Activated T-helper 1 cell treated with anti-CD3 and anti-CD28 coated beads, Interleukin-12 subunit alpha, Interleukin-12 subunit beta, Interleukin-2, Interleukin-4 antibody, amounts not matched to agents 30 ng/mL and 10 ng/mL and 1 ng/mL, durations not matched to agents 14 hours and 24 hours and 36 hours (primary cell): ENCODE measurements at regions of chr1 and their contacts with region 1.

Region 1: DNA sequence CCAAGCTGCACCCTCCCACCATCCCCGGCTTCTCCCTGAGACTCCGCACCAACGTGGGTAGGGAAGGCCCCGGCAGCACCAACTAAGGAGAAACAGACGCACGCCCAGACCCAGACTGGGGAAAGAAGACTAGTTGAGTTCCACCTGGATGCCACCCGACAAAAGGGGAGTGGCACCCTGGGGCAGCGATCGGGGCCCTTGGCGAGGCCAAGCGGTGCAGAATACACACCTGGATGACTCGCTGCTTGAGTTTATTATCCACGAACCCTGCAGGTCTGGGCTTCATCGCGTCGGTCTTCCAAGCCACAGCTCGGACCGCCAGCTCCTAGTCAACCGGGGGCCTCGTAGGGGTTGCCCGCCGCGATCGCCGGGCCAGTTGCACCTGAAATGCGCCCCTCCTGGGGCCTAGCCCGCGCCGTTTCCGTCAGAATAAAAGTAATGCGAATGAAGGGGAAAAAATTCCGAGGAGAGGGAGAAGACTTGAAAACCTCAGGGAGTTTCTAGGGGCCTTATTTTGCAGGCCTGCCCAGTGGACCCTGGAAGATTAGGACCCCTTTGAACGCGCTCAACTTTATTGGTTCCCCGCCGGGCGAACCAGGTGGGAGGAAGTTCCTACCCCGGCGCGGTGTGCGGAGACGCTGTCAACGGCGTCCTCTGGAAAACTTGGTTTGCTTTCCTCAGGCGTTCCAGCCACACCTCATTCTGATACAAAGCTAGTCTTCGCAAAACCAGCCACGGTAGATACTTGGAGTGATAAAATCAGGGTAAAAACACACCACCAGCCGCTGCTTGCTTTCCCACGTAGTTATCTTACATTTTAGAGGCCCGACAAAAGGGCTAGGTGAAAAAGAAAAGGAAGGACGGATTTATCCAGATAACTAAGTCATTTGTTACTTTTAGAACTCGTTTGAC is at the start of gene NVL:
- DNase-seq: peak; percentile 76
- H3K4me3 Mint-ChIP-seq: peak within 1 kb of the TSS; percentile 98
- H3K27ac Mint-ChIP-seq: peak within 1 kb of the TSS; percentile 100
- H3K4me1 Mint-ChIP-seq: peaks cover 45% of the 10 kb centered on the region
- H3K27me3 Mint-ChIP-seq: no peaks in the 10 kb centered on the region
- total RNA-seq, gene NVL: 47.2 and 47.6 TPM in 2 replicates

Region 2: GRCh38 chr1:223811634-223812415 is 518.3 kb before region 1 on chr1:
- intact Hi-C with region 1: loop called (anchors 2 kb)
- DNase-seq: no peak
- H3K4me3 Mint-ChIP-seq: no peak overlapping the region
- H3K27ac Mint-ChIP-seq: no peak overlapping the region
- H3K4me1 Mint-ChIP-seq: peaks cover 14% of the 10 kb centered on the region
- H3K27me3 Mint-ChIP-seq: no peaks in the 10 kb centered on the region

Region 3: GRCh38 chr1:223845810-223846682 is 484.1 kb before region 1 on chr1 and contains the start of gene TP53BP2:
- intact Hi-C with region 1: loop called (anchors 1 kb)
- DNase-seq: peak; percentile 81
- H3K4me3 Mint-ChIP-seq: peak within 1 kb of the TSS; percentile 95
- H3K27ac Mint-ChIP-seq: peak within 1 kb of the TSS; percentile 96
- H3K4me1 Mint-ChIP-seq: peaks cover 42% of the 10 kb centered on the region
- H3K27me3 Mint-ChIP-seq: peaks cover 5% of the 10 kb centered on the region
- total RNA-seq, gene TP53BP2: 40.4 and 47.2 TPM in 2 replicates

Region 4: DNA sequence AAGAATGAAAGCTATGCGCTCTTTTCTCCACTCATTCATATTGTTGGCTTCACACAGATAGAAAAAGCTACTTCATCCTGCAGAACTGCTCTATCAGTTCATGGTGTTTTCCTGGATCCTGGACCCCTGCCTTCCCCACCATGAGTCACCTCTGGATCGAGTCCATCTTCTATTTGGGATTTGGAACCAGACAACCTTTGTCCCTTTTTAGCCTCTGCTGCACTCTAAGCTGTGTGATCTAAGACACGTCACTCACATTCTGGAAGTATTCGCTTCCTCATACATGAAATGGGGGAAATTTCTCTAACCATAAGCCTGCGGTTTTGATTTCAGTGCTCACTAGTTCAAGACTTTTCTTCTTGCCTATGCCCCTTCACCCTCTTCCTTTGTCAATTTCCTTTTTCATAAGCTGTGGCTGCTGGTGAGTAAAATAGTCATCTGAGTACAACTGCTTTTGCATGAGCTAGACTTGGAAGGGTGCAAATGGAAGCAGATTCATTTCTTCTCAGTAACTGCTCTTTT is 161.2 kb before region 1 on chr1:
- intact Hi-C with region 1: loop called (anchors 1 kb)
- DNase-seq: peak; percentile 59
- H3K4me3 Mint-ChIP-seq: peak overlapping the region; percentile 60
- H3K27ac Mint-ChIP-seq: peak overlapping the region; percentile 76
- H3K4me1 Mint-ChIP-seq: peaks cover 38% of the 10 kb centered on the region
- H3K27me3 Mint-ChIP-seq: peaks cover 2% of the 10 kb centered on the region

Region 5: DNA sequence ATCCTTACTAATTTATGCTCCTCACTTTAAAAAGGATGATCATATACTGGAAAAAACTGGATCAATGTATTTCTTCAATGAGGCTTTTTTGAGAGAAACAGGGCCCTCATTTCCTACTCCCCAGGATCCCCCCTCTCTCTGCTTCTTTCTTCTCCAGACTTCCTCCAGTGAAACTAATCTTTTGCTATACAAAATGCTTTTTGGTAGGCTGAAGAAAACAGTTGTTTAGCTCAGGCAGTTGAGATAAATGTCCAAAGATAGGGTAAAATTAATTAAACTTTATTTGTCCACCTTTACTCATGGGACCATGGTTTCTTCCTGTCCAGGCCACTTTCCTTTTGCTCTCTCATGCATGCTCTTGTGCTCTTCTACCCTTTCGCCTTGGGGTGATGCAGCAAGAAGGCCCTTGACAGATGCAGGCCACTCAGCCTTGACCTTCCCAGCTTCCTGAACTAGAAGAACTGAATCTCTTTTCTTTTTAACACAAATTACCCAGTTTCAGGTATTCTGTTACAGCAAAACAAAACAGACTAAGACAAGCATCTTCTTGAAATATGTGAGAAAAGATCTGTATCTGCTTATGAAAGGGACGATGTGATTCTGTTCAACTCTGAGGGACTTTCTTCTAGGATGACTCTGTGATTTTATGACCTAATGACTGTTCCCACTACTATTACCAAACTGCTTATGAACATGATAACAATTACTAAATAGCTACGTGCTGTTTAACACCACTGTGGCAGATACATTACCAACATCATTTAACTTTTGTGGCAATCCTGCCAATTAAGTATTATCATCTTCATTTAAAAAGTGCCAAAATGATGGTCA is 63.8 kb before region 1 on chr1:
- intact Hi-C with region 1: loop called (anchors 5 kb)
- DNase-seq: no peak
- H3K4me3 Mint-ChIP-seq: no peak overlapping the region
- H3K27ac Mint-ChIP-seq: peak overlapping the region; percentile 69
- H3K4me1 Mint-ChIP-seq: peaks cover 42% of the 10 kb centered on the region
- H3K27me3 Mint-ChIP-seq: no peaks in the 10 kb centered on the region

Region 6: DNA sequence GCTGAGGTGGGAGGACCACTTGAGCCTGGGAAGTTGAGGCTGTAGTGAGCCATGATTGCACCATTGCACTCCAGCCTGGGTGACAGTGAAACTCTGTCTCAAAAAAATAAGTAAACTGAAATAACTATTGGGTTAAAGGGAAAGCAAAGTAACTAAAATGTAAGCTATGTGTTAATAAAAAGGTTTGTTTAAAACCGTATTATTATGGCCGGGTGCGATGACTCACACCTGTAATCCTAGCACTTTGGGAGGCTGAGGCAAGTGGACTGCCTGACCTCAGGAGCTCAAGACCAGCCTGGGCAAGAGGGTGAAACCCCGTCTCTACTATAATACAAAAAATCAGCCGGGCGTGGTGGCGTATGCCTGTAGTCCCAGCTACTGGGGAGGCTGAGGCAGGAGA is 27.2 kb before region 1 on chr1:
- intact Hi-C with region 1: no loop called
- DNase-seq: no peak
- H3K4me3 Mint-ChIP-seq: no peak overlapping the region
- H3K27ac Mint-ChIP-seq: no peak overlapping the region
- H3K4me1 Mint-ChIP-seq: no peaks in the 10 kb centered on the region
- H3K27me3 Mint-ChIP-seq: no peaks in the 10 kb centered on the region

Region 7: DNA sequence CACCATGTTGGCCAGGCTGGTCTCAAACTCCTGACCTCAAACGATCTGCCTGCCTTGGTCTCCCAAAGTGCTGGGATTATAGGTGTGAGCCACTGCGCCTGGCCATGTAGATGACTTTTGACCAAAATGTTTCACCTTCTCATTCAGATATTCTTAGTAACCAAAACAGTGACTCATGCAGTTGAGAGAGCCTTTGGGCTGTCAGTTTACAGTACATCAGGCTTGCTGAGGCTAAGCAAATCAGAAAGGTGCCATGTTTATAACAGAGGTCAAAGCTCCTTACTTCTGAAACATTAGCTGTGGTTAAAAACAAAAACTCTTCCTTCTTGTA is 47.5 kb after region 1 on chr1:
- intact Hi-C with region 1: loop called (anchors 1 kb)
- DNase-seq: no peak
- H3K4me3 Mint-ChIP-seq: peak overlapping the region; percentile 66
- H3K27ac Mint-ChIP-seq: peak overlapping the region; percentile 94
- H3K4me1 Mint-ChIP-seq: peaks cover 91% of the 10 kb centered on the region
- H3K27me3 Mint-ChIP-seq: no peaks in the 10 kb centered on the region

Region 8: GRCh38 chr1:224497714-224498573 is 167.8 kb after region 1 on chr1:
- intact Hi-C with region 1: loop called (anchors 1 kb)
- DNase-seq: peak; percentile 62
- H3K4me3 Mint-ChIP-seq: peak overlapping the region; percentile 59
- H3K27ac Mint-ChIP-seq: peak overlapping the region; percentile 97
- H3K4me1 Mint-ChIP-seq: peaks cover 63% of the 10 kb centered on the region
- H3K27me3 Mint-ChIP-seq: peaks cover 3% of the 10 kb centered on the region